IMR-90 (cell line): ENCODE measurements at regions of chr13 and their contacts with region 1.

Region 1: GRCh38 chr13:49443704-49444523 is at the starts of genes CAB39L and SETDB2:
- DNase-seq: peak; percentile 99
- ATAC-seq: peak; percentile 97
- H3K4me3 ChIP-seq: peak within 1 kb of the TSS; percentile 66
- H3K27ac ChIP-seq: peak within 1 kb of the TSS; percentile 93
- H3K4me1 ChIP-seq: no peaks in the 10 kb centered on the region
- H3K27me3 ChIP-seq: no peaks in the 10 kb centered on the region
- CTCF ChIP-seq: peak; percentile 48
- POLR2A ChIP-seq: peak; percentile 85
- RAD21 ChIP-seq: no peak
- total RNA-seq, gene CAB39L: 16.7 and 21.9 TPM in 2 replicates
- total RNA-seq, gene SETDB2: 5.7 and 8.6 TPM in 2 replicates

Region 2: GRCh38 chr13:49247643-49248621 is 196.0 kb before region 1 on chr13 and contains the start of gene CDADC1:
- CTCF ChIA-PET with region 1: no interaction called
- POLR2A ChIA-PET with region 1: no interaction called
- dilution Hi-C with region 1: no loop called
- in situ Hi-C with region 1: no loop called
- intact Hi-C with region 1: no loop called
- DNase-seq: peak; percentile 95
- ATAC-seq: peak; percentile 97
- H3K4me3 ChIP-seq: peak within 1 kb of the TSS; percentile 60
- H3K27ac ChIP-seq: peak within 1 kb of the TSS; percentile 55
- H3K4me1 ChIP-seq: no peaks in the 10 kb centered on the region
- H3K27me3 ChIP-seq: no peaks in the 10 kb centered on the region
- CTCF ChIP-seq: 0 out of 2 replicates have a peak, but pooled peaks have one; percentile 7
- POLR2A ChIP-seq: peak; percentile 59
- RAD21 ChIP-seq: no peak
- total RNA-seq, gene CDADC1: 0.54 and 0.83 TPM in 2 replicates

Region 3: GRCh38 chr13:49308089-49308875 is 135.6 kb before region 1 on chr13:
- CTCF ChIA-PET with region 1: no interaction called
- POLR2A ChIA-PET with region 1: no interaction called
- dilution Hi-C with region 1: no loop called
- in situ Hi-C with region 1: loop called (anchors 5 kb)
- intact Hi-C with region 1: no loop called
- DNase-seq: peak; percentile 66
- ATAC-seq: peak; percentile 84
- H3K4me3 ChIP-seq: no peak overlapping the region
- H3K27ac ChIP-seq: peak overlapping the region; percentile 91
- H3K4me1 ChIP-seq: peaks cover 17% of the 10 kb centered on the region
- H3K27me3 ChIP-seq: no peaks in the 10 kb centered on the region
- CTCF ChIP-seq: no peak
- POLR2A ChIP-seq: no peak
- RAD21 ChIP-seq: no peak

Region 4: DNA sequence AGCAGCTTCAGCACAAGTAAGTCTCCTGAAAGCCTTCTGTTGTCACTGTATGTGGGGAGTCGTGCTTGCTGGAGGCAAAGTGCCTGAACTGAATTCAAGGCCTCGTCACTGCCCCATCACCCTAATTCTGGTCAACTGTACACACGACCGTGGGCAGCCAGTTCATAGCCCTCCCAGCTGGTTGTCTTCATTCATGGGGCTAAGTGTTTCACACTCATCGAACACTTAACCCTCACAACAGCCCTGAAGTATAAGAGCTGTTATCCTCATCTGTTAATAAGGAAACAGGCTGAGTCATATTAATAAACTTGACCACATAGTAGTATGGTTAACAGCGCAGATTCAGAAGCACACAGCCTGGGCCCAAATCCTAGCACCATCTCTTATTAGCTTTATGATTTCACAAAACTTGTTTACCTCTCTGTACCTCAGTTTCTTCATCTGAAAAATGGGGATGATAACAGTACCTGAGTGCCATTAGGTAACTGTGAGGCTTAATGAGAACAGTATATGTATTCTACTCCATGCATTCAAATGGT is 129.5 kb before region 1 on chr13:
- CTCF ChIA-PET with region 1: no interaction called
- POLR2A ChIA-PET with region 1: no interaction called
- dilution Hi-C with region 1: no loop called
- in situ Hi-C with region 1: loop called (anchors 5 kb)
- intact Hi-C with region 1: loop called (anchors 2 kb)
- DNase-seq: peak; percentile 65
- ATAC-seq: peak; percentile 45
- H3K4me3 ChIP-seq: no peak overlapping the region
- H3K27ac ChIP-seq: peak overlapping the region; percentile 97
- H3K4me1 ChIP-seq: peaks cover 17% of the 10 kb centered on the region
- H3K27me3 ChIP-seq: no peaks in the 10 kb centered on the region
- CTCF ChIP-seq: no peak
- POLR2A ChIP-seq: no peak
- RAD21 ChIP-seq: no peak

Region 5: DNA sequence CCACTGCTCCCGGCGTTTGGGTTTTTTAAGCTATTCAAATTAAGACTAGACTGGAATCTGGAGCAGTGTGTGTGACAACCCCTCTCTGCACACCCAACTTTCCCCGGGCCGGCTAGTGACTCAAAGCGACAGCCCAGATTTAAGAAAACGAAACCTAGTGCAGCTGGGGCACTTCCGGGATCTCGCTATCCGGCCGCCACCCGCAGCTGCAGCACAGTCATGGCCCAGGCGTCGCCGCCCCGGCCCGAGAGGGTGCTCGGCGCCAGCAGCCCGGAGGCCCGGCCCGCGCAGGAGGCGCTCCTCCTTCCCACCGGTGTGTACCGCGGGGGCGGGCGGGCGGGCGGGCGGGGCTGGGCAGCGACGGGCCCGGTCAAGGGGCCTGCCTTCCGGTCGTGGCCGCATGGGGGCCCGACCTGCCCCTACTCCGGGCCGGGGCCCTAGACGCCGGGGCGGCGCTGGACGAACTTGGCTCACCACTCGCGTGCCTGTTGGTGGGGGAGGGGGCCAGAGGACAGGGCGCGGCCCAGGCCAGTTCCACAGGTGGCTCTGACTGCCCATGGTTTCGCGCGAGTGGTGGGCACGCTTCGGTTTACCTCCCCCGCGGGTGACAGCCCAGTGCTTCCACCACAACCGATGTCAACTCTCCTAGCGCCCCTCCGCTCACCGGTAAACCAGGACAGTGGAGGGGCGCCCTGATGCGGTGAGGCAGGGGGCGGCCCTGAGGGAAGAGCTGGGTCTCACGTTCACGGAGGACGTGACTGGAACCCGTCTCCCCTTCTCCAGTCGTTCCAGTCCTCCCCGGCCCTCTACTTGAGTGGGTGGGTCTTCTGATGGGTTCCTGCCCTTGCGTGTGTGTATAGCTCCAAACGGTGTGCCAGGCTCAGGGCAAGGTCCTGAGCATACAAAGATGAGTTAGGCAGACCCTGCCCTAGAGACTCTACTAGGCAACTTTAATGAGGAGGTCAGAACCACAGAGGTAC is 52.2 kb after region 1 on chr13 and contains the start of gene PHF11:
- CTCF ChIA-PET with region 1: no interaction called
- POLR2A ChIA-PET with region 1: interaction called, 3 read pairs
- dilution Hi-C with region 1: no loop called
- in situ Hi-C with region 1: no loop called
- intact Hi-C with region 1: loop called (anchors 2 kb)
- DNase-seq: peak; percentile 76
- ATAC-seq: peak; percentile 73
- H3K4me3 ChIP-seq: peak within 1 kb of the TSS; percentile 56
- H3K27ac ChIP-seq: peak within 1 kb of the TSS; percentile 81
- H3K4me1 ChIP-seq: peaks cover 12% of the 10 kb centered on the region
- H3K27me3 ChIP-seq: no peaks in the 10 kb centered on the region
- CTCF ChIP-seq: no peak
- POLR2A ChIP-seq: peak; percentile 48; the same call in 1 of the 2 replicates
- RAD21 ChIP-seq: no peak
- total RNA-seq, gene PHF11: 3.9 and 6.7 TPM in 2 replicates

Region 6: DNA sequence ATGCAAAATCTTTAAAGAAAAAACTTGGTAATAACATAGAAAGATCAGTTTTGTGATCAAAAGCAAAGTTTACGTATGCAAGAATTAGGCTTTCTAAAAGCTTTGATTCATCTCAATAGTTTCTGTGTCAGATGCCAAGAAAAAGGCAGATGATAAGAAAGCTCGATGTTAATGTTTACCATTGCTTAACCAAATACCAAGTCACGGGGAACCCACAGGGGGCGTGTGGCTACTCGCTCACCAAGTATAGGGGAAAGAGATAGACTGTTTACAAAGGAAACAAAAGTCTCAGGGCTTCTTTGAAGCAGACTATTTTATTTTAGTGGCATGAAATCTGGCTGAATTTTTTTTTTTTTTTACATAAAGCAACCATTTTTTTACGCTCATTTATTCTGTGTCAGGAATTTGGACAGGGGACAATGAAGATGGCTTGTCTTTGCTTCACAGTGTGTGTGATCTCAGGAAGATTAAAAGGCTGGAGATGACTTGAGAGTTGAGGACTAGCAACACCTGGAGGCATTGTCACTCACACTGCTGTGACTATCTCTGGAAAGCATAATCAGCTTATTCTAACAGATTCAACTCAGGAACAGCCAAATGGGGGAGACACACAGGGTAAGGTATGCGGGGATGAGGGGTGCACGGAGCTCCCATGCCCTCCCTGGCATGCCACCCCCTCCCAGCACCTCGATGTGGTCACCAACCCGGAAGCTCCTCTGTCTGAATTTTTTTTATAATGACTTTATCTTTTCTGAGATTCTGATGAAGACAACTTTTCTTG is 116.5 kb after region 1 on chr13:
- CTCF ChIA-PET with region 1: no interaction called
- POLR2A ChIA-PET with region 1: no interaction called
- dilution Hi-C with region 1: no loop called
- in situ Hi-C with region 1: no loop called
- intact Hi-C with region 1: loop called (anchors 1 kb)
- DNase-seq: peak; percentile 79
- ATAC-seq: peak; percentile 99
- H3K4me3 ChIP-seq: no peak overlapping the region
- H3K27ac ChIP-seq: peak overlapping the region; percentile 5; the same call in 1 of the 2 replicates
- H3K4me1 ChIP-seq: peaks cover 7% of the 10 kb centered on the region
- H3K27me3 ChIP-seq: no peaks in the 10 kb centered on the region
- CTCF ChIP-seq: peak; percentile 50
- POLR2A ChIP-seq: no peak
- RAD21 ChIP-seq: peak; percentile 36; the same call in 1 of the 2 replicates